HepG2 (cell line): ENCODE measurements at regions of chr2 and their contacts with region 1.

Region 1: DNA sequence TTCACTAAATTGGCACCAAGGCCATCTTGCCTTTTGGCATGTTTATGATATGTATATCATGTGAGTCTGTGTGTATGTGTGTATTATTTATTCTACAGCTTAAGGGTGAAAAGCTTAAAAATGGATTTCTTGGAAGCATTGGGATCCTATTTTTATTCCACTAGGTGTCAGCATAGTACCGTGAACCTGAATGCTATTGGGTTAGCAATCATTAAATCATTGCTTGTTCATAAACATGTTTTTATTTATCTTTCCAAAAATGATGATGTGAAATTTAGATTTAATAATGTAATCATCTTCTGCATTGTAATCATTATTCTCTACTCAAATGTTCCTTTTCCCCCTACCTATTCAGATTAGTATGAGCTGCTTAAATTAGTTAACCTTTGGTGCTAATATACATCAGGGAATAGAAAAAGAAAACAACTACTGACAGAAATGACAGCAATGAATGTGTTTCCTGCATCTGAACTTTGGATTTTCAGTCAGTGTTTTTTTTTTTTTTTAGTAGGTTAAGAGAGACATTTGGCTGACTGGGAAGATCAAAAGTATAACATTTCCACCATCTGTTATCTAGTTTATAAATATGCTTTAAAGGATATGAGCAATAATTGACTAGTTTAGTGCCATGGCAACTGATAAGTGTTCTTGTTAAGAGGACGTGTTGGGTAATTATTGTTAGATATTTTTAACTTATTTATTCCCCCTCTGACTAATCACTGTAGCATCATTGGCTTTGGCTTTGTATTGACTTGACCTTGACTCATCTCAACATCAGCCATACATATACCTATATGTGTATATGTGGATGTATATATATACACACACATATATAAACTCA is 14.1 kb upstream of the ZSWIM2 start:
- DNase-seq: peak; percentile 23
- ATAC-seq: peak; percentile 75
- H3K4me3 ChIP-seq: no peak overlapping the region
- H3K27ac ChIP-seq: no peak overlapping the region
- H3K4me1 ChIP-seq: no peaks in the 10 kb centered on the region
- H3K27me3 ChIP-seq: no peaks in the 10 kb centered on the region
- CTCF ChIP-seq: peak; percentile 77
- EP300 ChIP-seq: no peak
- POLR2A ChIP-seq: no peak
- RAD21 ChIP-seq: peak; percentile 39; the same call in 1 of the 2 replicates

Region 2: DNA sequence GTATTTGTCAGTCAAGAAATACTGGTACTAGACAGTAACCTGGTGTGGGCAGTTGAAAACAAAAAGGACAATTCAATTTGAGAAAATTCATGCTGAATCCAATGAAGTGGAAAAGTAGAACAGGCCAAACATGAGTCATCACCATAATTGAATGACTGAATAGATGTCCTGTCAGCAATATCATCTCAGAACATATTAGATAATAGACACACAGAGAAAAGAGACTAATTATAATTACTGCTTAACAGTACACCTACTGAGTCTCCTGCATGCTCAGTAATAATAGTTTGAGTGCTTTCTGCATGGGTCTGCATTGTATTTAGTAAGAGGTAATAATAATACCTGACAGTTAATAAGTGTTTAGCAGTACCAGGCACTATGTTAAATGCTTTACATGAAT is 515.6 kb before region 1 on chr2:
- CTCF ChIA-PET with region 1: no interaction called
- POLR2A ChIA-PET with region 1: no interaction called
- in situ Hi-C with region 1: no loop called
- intact Hi-C with region 1: no loop called
- DNase-seq: no peak
- ATAC-seq: no peak
- H3K4me3 ChIP-seq: no peak overlapping the region
- H3K27ac ChIP-seq: no peak overlapping the region
- H3K4me1 ChIP-seq: peaks cover 11% of the 10 kb centered on the region
- H3K27me3 ChIP-seq: no peaks in the 10 kb centered on the region
- CTCF ChIP-seq: no peak
- EP300 ChIP-seq: no peak
- POLR2A ChIP-seq: no peak
- RAD21 ChIP-seq: no peak

Region 3: GRCh38 chr2:186841940-186842339 is 21.1 kb before region 1 on chr2:
- CTCF ChIA-PET with region 1: no interaction called
- POLR2A ChIA-PET with region 1: no interaction called
- in situ Hi-C with region 1: no loop called
- intact Hi-C with region 1: no loop called
- DNase-seq: no peak
- ATAC-seq: no peak
- H3K4me3 ChIP-seq: no peak overlapping the region
- H3K27ac ChIP-seq: no peak overlapping the region
- H3K4me1 ChIP-seq: no peaks in the 10 kb centered on the region
- H3K27me3 ChIP-seq: no peaks in the 10 kb centered on the region
- CTCF ChIP-seq: no peak
- EP300 ChIP-seq: no peak
- POLR2A ChIP-seq: no peak
- RAD21 ChIP-seq: no peak

Region 4: GRCh38 chr2:186925514-186925913 is 62.4 kb after region 1 on chr2:
- CTCF ChIA-PET with region 1: no interaction called
- POLR2A ChIA-PET with region 1: no interaction called
- in situ Hi-C with region 1: no loop called
- intact Hi-C with region 1: no loop called
- DNase-seq: no peak
- ATAC-seq: no peak
- H3K4me3 ChIP-seq: no peak overlapping the region
- H3K27ac ChIP-seq: no peak overlapping the region
- H3K4me1 ChIP-seq: no peaks in the 10 kb centered on the region
- H3K27me3 ChIP-seq: no peaks in the 10 kb centered on the region
- CTCF ChIP-seq: no peak
- EP300 ChIP-seq: no peak
- POLR2A ChIP-seq: no peak
- RAD21 ChIP-seq: no peak

Region 5: DNA sequence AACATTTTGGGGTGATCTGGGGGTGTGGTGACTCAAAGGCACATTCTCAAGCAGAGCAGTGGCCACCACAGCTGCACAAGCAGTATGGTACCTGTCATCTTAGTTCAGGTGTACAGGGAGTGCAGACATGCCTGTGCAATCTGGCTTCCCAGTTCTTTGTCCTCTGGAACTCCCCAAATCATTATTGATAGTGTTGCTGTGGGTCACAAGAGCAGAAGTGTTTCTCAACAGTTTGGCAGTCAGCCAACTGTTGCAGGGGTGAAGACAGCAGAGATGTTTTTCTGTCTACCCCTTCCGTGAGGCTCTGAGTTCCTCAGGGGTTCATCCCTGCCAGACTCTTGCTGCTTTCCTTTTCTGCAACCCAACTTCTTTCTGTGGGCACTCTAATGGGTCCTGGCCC is 192.4 kb after region 1 on chr2:
- CTCF ChIA-PET with region 1: no interaction called
- POLR2A ChIA-PET with region 1: no interaction called
- in situ Hi-C with region 1: no loop called
- intact Hi-C with region 1: no loop called
- DNase-seq: peak; percentile 15
- ATAC-seq: peak; percentile 67
- H3K4me3 ChIP-seq: no peak overlapping the region
- H3K27ac ChIP-seq: no peak overlapping the region
- H3K4me1 ChIP-seq: no peaks in the 10 kb centered on the region
- H3K27me3 ChIP-seq: no peaks in the 10 kb centered on the region
- CTCF ChIP-seq: no peak
- EP300 ChIP-seq: no peak
- POLR2A ChIP-seq: no peak
- RAD21 ChIP-seq: no peak

Region 6: DNA sequence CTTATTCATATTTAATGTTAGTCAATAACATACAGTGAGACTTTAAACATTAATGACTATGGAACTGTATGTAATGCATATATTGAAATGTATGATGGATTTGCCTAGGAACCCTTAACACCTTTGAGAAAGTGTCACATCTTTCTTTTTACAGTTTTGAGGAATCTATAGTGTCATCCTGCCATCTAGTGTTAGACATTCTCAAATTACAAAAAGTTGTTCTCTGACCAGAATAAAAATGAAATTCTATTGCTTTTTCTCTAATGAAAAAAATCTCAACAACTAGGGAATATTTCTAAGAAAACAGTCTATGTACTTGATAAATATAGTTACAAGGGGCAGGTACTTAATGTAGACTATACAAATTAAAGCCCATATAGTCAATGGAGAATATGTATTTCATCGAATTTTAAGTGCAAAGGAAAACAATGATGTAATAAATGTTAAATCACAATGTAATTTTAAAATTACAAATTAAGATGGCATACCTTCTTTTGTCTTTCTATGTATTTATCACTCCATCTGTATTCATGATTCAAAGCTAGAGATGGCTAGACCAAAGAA is 590.1 kb after region 1 on chr2:
- CTCF ChIA-PET with region 1: interaction called, 23 read pairs
- POLR2A ChIA-PET with region 1: no interaction called
- in situ Hi-C with region 1: loop called (anchors 5 kb)
- intact Hi-C with region 1: loop called (anchors 1 kb)
- DNase-seq: no peak
- ATAC-seq: 0 out of 3 replicates have a peak, but pooled peaks have one; percentile 24
- H3K4me3 ChIP-seq: no peak overlapping the region
- H3K27ac ChIP-seq: no peak overlapping the region
- H3K4me1 ChIP-seq: no peaks in the 10 kb centered on the region
- H3K27me3 ChIP-seq: no peaks in the 10 kb centered on the region
- CTCF ChIP-seq: peak; percentile 54
- EP300 ChIP-seq: no peak
- POLR2A ChIP-seq: no peak
- RAD21 ChIP-seq: no peak

Region 7: GRCh38 chr2:187581125-187581896 is 718.2 kb after region 1 on chr2:
- CTCF ChIA-PET with region 1: no interaction called
- POLR2A ChIA-PET with region 1: no interaction called
- in situ Hi-C with region 1: loop called (anchors 25 kb)
- intact Hi-C with region 1: loop called (anchors 5 kb)
- DNase-seq: peak; percentile 59
- ATAC-seq: peak; percentile 18; the same call in 1 of the 3 replicates
- H3K4me3 ChIP-seq: peak overlapping the region; percentile 21 to 60 (median 51); a peak in 5 of 6 replicates
- H3K27ac ChIP-seq: no peak overlapping the region
- H3K4me1 ChIP-seq: peaks cover 33% of the 10 kb centered on the region
- H3K27me3 ChIP-seq: no peaks in the 10 kb centered on the region
- CTCF ChIP-seq: peak; percentile 79
- EP300 ChIP-seq: no peak
- POLR2A ChIP-seq: no peak
- RAD21 ChIP-seq: no peak; the same call in 1 of the 2 replicates

Region 8: DNA sequence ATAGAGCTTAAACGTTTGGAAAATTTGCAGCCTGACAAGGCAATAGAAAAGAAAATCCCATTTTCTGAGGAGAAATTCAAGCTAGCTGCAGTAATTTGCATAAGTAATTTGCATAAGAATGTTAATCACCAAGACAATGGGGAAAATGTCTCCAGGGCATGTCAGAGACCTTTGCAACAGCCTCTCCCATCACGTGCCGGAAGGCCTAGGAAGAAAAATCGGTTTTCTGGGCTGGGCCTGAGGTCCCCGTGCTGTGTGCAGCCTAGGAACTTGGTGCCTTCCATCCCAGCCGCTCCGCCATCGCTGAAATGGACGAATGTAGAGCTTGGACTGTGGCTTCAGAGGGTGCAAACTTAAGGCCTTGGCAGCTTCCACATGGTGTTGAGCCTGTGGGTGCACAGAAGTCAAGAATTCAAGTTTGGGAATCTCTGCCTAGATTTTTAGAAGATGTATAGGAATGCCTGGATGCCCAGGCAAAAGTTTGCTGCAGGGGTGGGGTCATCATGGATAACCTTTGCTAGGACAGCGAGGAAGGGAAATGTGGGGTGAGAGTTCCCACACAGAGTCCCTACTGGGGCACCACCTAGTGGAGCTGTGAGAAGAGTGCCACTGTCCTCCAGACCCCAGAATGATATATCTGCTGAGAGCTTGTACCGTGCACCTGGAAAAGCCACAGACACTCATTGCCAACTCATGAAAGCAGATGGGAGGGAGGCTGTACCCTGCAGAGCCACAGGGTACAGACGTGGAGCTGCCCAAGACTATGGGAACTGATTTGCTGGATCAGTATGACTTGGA is 1593.2 kb after region 1 on chr2:
- CTCF ChIA-PET with region 1: no interaction called
- POLR2A ChIA-PET with region 1: no interaction called
- in situ Hi-C with region 1: no loop called
- intact Hi-C with region 1: loop called (anchors 10 kb)
- DNase-seq: no peak
- ATAC-seq: peak; percentile 74
- H3K4me3 ChIP-seq: no peak overlapping the region
- H3K27ac ChIP-seq: no peak overlapping the region
- H3K4me1 ChIP-seq: no peaks in the 10 kb centered on the region
- H3K27me3 ChIP-seq: no peaks in the 10 kb centered on the region
- CTCF ChIP-seq: peak; percentile 38
- EP300 ChIP-seq: no peak
- POLR2A ChIP-seq: no peak
- RAD21 ChIP-seq: no peak

Region 9: GRCh38 chr2:188512456-188512855 is 1649.4 kb after region 1 on chr2:
- CTCF ChIA-PET with region 1: no interaction called
- POLR2A ChIA-PET with region 1: no interaction called
- in situ Hi-C with region 1: no loop called
- intact Hi-C with region 1: loop called (anchors 5 kb)
- DNase-seq: peak; percentile 33
- ATAC-seq: peak; percentile 56
- H3K4me3 ChIP-seq: no peak overlapping the region
- H3K27ac ChIP-seq: no peak overlapping the region
- H3K4me1 ChIP-seq: no peaks in the 10 kb centered on the region
- H3K27me3 ChIP-seq: no peaks in the 10 kb centered on the region
- CTCF ChIP-seq: peak; percentile 61
- EP300 ChIP-seq: no peak
- POLR2A ChIP-seq: no peak
- RAD21 ChIP-seq: no peak